Activated B cell treated with CpG ODN at 0.5 μM for 24 hours (primary cell): ENCODE measurements at regions of chr18 and their contacts with region 1.

Region 1: DNA sequence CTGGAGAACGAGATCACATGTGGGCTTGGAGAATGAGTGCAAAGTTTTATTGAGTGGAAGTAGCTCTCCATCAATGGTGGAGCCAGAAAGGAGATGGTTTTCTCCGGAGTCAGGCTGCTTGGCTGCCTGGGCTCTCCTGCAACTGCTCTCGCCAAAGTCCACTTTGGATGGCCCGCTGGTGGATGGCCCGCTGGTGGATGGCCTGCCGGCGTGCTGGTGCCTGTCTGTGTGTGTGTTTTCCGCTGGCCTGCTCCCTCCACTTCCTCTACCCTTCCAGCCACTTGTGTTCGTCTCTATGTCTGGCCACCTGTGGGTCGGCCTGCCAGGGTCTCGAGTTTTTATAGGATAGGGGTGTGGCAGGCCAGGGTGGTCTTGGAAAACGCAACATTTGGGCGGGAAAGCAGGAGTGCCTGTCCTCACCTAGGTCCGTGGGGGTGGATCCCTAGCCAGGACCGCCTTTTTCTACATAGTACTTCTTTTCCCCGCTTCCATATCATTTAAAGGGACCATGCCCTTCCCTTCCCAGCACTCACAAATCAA is 1292.1 kb upstream of the PIK3C3 start:
- DNase-seq: no peak
- ATAC-seq: no peak
- H3K4me3 Mint-ChIP-seq: no peak overlapping the region
- H3K27ac Mint-ChIP-seq: no peak overlapping the region
- H3K4me1 Mint-ChIP-seq: no peaks in the 10 kb centered on the region
- H3K27me3 Mint-ChIP-seq: no peaks in the 10 kb centered on the region
- CTCF ChIP-seq: no peak

Region 2: GRCh38 chr18:40631319-40631718 is 31.6 kb before region 1 on chr18:
- CTCF ChIA-PET with region 1: no interaction called
- POLR2A ChIA-PET with region 1: no interaction called
- intact Hi-C with region 1: no loop called
- DNase-seq: no peak
- ATAC-seq: no peak
- H3K4me3 Mint-ChIP-seq: no peak overlapping the region
- H3K27ac Mint-ChIP-seq: no peak overlapping the region
- H3K4me1 Mint-ChIP-seq: no peaks in the 10 kb centered on the region
- H3K27me3 Mint-ChIP-seq: no peaks in the 10 kb centered on the region
- CTCF ChIP-seq: no peak

Region 3: GRCh38 chr18:40642692-40643229 is 20.2 kb before region 1 on chr18:
- CTCF ChIA-PET with region 1: no interaction called
- POLR2A ChIA-PET with region 1: no interaction called
- intact Hi-C with region 1: no loop called
- DNase-seq: no peak
- ATAC-seq: no peak
- H3K4me3 Mint-ChIP-seq: no peak overlapping the region
- H3K27ac Mint-ChIP-seq: no peak overlapping the region
- H3K4me1 Mint-ChIP-seq: no peaks in the 10 kb centered on the region
- H3K27me3 Mint-ChIP-seq: no peaks in the 10 kb centered on the region
- CTCF ChIP-seq: no peak

Region 4: GRCh38 chr18:40708726-40709125 is 45.8 kb after region 1 on chr18:
- CTCF ChIA-PET with region 1: no interaction called
- POLR2A ChIA-PET with region 1: no interaction called
- intact Hi-C with region 1: loop called (anchors 5 kb)
- DNase-seq: no peak
- ATAC-seq: no peak
- H3K4me3 Mint-ChIP-seq: no peak overlapping the region
- H3K27ac Mint-ChIP-seq: no peak overlapping the region
- H3K4me1 Mint-ChIP-seq: no peaks in the 10 kb centered on the region
- H3K27me3 Mint-ChIP-seq: no peaks in the 10 kb centered on the region
- CTCF ChIP-seq: no peak